ENCODE measurements at regions of chr12 and their contacts with region 1.

Region 1: GRCh38 chr12:81257947-81258551 is 180.2 kb downstream of the ACSS3 start:
- DNase-seq: peak; percentile 28
- ATAC-seq: peak; percentile 57; the same call in 1 of the 2 replicates
- H3K4me3 ChIP-seq: no peak overlapping the region
- H3K27ac ChIP-seq: no peak overlapping the region
- H3K4me1 ChIP-seq: no peaks in the 10 kb centered on the region
- H3K27me3 ChIP-seq: no peaks in the 10 kb centered on the region
- CTCF ChIP-seq: peak; percentile 42 to 72 (median 51); a peak in 4 of 6 replicates
- POLR2A ChIP-seq: no peak
- RAD21 ChIP-seq: peak; percentile 77

Region 2: DNA sequence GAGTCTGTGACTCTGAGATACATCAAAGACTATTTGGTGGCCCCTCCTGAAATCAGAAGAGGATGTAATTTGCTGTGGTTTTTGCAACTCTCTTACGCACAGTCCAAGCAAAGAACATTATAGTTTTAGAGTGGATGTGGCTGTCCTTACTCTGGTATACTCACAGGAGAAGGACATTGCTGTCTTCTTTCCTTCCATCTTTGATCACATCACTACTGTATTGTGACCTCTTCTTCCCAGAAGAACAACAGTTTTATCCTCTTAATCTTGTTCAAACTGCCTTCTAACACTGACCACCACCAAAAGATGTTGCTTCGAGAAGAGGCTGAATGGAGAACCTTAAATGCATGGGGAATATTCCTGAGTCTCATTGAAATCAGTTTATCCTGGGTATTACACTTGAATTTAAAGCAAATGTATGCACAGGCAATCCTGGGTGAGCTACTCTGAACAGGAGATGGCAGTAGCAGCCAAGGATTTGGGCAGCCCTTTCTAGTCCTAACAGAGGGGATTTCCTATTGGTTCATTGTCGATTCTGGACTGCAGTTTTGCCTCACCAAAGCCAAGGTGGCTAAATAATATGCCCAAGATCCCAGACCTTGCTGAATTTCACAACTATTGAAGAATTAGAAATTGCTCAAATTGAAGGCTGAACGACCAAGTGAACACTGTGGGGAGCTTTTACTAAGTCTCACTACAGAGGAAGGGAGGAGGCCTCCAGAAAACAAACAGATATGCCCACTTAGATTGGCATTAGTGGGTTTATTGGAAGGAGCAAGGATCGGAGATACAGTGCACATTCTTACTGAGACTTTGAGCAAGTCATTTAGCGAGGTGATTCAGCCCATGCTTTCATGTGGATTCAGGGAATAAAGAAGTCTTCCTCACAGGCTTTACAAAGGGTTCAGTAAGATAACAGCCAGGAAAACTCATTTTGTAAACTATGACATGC is 1850.1 kb before region 1 on chr12:
- CTCF ChIA-PET with region 1: no interaction called
- POLR2A ChIA-PET with region 1: no interaction called
- RAD21 ChIA-PET with region 1: no interaction called
- intact Hi-C with region 1: loop called (anchors 5 kb)
- DNase-seq: peak; percentile 63
- ATAC-seq: peak; percentile 99
- H3K4me3 ChIP-seq: no peak overlapping the region
- H3K27ac ChIP-seq: no peak overlapping the region
- H3K4me1 ChIP-seq: no peaks in the 10 kb centered on the region
- H3K27me3 ChIP-seq: no peaks in the 10 kb centered on the region
- CTCF ChIP-seq: peak; percentile 54 to 79 (median 60); a peak in 5 of 6 replicates
- POLR2A ChIP-seq: no peak
- RAD21 ChIP-seq: peak; percentile 83

Region 3: GRCh38 chr12:80195074-80195726 is 1062.8 kb before region 1 on chr12:
- CTCF ChIA-PET with region 1: interaction called, 39 read pairs
- POLR2A ChIA-PET with region 1: interaction called, 4 read pairs
- RAD21 ChIA-PET with region 1: no interaction called
- intact Hi-C with region 1: loop called (anchors 2 kb)
- DNase-seq: peak; percentile 36
- ATAC-seq: peak; percentile 85
- H3K4me3 ChIP-seq: no peak overlapping the region
- H3K27ac ChIP-seq: no peak overlapping the region
- H3K4me1 ChIP-seq: no peaks in the 10 kb centered on the region
- H3K27me3 ChIP-seq: no peaks in the 10 kb centered on the region
- CTCF ChIP-seq: peak; percentile 50 to 74 (median 73); a peak in 5 of 6 replicates
- POLR2A ChIP-seq: no peak
- RAD21 ChIP-seq: peak; percentile 65

Region 4: GRCh38 chr12:80837348-80837985 is 420.6 kb before region 1 on chr12:
- CTCF ChIA-PET with region 1: interaction called, 20 read pairs
- POLR2A ChIA-PET with region 1: no interaction called
- RAD21 ChIA-PET with region 1: interaction called in 1 of 2 experiments, 3 read pairs
- intact Hi-C with region 1: loop called (anchors 10 kb)
- DNase-seq: peak; percentile 19
- ATAC-seq: peak; percentile 90
- H3K4me3 ChIP-seq: no peak overlapping the region
- H3K27ac ChIP-seq: no peak overlapping the region
- H3K4me1 ChIP-seq: no peaks in the 10 kb centered on the region
- H3K27me3 ChIP-seq: peaks cover 17% of the 10 kb centered on the region
- CTCF ChIP-seq: peak; percentile 21 to 82 (median 75); a peak in 4 of 6 replicates
- POLR2A ChIP-seq: no peak
- RAD21 ChIP-seq: peak; percentile 55

Region 5: GRCh38 chr12:81381982-81382381 is 123.9 kb after region 1 on chr12:
- CTCF ChIA-PET with region 1: no interaction called
- POLR2A ChIA-PET with region 1: no interaction called
- RAD21 ChIA-PET with region 1: no interaction called
- intact Hi-C with region 1: no loop called
- DNase-seq: no peak
- ATAC-seq: no peak
- H3K4me3 ChIP-seq: no peak overlapping the region
- H3K27ac ChIP-seq: no peak overlapping the region
- H3K4me1 ChIP-seq: no peaks in the 10 kb centered on the region
- H3K27me3 ChIP-seq: peaks cover 5% of the 10 kb centered on the region; the same call in 1 of the 2 replicates
- CTCF ChIP-seq: no peak
- POLR2A ChIP-seq: no peak
- RAD21 ChIP-seq: no peak

Region 6: GRCh38 chr12:81440001-81440400 is 182.0 kb after region 1 on chr12:
- CTCF ChIA-PET with region 1: no interaction called
- POLR2A ChIA-PET with region 1: no interaction called
- RAD21 ChIA-PET with region 1: no interaction called
- intact Hi-C with region 1: no loop called
- DNase-seq: no peak
- ATAC-seq: no peak
- H3K4me3 ChIP-seq: no peak overlapping the region
- H3K27ac ChIP-seq: no peak overlapping the region
- H3K4me1 ChIP-seq: no peaks in the 10 kb centered on the region
- H3K27me3 ChIP-seq: no peaks in the 10 kb centered on the region
- CTCF ChIP-seq: no peak
- POLR2A ChIP-seq: no peak
- RAD21 ChIP-seq: no peak

Measured in HCT116 (cell line).